ENCODE measurements at regions of chr1 and their contacts with region 1.

Region 1: DNA sequence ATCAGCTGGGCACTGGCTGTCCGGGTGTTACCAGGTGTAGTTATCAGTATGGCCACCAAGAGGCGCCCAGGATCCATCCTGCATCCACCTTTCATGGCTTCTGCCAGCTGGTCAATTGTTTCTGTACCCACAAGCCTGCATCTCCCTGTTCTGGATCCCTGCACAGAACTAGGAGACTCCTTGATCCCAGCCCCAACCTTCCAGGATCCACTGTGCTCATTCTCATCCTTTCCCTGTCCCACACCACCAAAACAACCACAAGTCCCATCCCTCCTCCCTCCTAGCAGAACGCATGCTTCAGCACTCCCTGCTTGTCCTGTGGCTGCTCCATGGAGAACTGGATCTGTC is 27.2 kb upstream of the FOXE3 start:
- DNase-seq: no peak
- H3K4me3 ChIP-seq: no peak overlapping the region
- H3K27me3 ChIP-seq: no peaks in the 10 kb centered on the region
- CTCF ChIP-seq: peak; percentile 88

Region 2: DNA sequence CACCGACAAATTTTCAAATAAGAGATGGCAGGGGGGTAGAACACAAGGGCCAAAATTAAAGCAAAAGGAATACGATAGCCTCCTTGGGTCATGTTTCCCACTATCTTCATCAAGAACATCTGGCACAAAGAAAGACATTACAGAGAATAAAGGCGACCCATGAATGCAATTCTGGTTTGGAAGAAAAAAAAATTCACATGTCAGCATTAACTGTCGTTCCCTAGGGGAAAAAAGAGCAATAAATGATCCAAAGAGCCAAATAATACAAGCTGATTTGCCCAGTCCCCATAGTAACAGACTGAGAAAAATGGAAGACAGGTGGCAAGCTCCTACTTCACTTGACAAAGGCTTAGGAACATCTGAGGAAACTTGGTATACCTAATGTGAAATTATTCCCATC is 79.4 kb before region 1 on chr1:
- CTCF ChIA-PET with region 1: no interaction called
- POLR2A ChIA-PET with region 1: no interaction called
- DNase-seq: no peak
- H3K4me3 ChIP-seq: no peak overlapping the region
- H3K27me3 ChIP-seq: no peaks in the 10 kb centered on the region
- CTCF ChIP-seq: no peak

Region 3: DNA sequence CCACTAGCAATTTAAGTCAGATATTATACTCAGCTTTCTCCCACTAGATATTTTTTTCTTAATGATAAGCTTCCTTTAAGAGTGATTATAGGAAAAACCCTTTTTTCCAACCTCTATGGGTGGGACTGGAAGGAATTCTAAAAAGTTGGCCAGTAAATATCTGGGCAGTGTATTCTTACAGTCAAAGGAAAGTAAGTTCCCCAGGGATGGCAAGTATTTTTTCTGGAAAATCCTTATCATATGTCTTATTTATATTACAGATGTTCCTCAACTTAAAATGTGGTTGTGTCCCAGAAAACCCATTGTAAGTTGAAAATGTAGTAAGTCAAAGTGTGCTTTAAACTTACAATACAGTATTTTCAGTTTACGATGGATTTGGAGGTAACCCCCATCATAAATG is 26.0 kb before region 1 on chr1:
- CTCF ChIA-PET with region 1: no interaction called
- POLR2A ChIA-PET with region 1: no interaction called
- DNase-seq: no peak
- H3K4me3 ChIP-seq: no peak overlapping the region
- H3K27me3 ChIP-seq: no peaks in the 10 kb centered on the region
- CTCF ChIP-seq: no peak

Region 4: DNA sequence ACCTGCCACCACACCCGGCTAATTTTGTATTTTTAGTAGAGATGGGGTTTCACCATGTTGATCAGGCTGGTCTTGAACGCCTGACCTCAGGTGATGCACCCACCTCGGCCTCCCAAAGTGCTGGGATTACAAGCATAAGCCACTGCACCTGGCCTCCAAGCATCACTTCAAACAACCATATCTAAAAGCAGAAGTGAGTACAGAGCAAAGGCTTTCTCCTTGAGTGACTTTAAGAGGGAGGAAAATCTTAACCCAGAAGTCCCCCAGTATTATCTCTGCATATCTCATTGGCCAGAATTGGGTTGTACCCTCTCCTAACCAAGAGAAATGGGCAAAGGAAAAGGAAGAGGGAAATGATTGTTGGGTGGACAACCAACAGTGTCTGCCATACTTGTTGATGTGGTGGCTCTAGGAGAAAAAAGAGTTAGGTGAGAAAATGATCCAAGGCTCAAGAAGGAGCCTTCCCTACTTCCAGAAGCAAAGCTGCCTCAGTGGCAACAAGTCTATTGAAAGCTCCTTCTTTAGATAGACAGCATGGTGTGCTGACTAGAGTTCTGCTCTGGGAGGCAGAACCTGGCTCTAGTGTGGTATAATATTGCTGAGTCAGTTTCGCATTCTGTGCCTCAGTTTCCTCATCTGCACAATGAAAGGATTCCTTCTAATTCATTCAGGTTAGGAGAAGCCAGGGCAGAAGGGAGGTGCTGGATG is 10.4 kb after region 1 on chr1:
- CTCF ChIA-PET with region 1: interaction called, 34 read pairs
- POLR2A ChIA-PET with region 1: no interaction called
- DNase-seq: no peak
- H3K4me3 ChIP-seq: no peak overlapping the region
- H3K27me3 ChIP-seq: no peaks in the 10 kb centered on the region
- CTCF ChIP-seq: no peak

Region 5: DNA sequence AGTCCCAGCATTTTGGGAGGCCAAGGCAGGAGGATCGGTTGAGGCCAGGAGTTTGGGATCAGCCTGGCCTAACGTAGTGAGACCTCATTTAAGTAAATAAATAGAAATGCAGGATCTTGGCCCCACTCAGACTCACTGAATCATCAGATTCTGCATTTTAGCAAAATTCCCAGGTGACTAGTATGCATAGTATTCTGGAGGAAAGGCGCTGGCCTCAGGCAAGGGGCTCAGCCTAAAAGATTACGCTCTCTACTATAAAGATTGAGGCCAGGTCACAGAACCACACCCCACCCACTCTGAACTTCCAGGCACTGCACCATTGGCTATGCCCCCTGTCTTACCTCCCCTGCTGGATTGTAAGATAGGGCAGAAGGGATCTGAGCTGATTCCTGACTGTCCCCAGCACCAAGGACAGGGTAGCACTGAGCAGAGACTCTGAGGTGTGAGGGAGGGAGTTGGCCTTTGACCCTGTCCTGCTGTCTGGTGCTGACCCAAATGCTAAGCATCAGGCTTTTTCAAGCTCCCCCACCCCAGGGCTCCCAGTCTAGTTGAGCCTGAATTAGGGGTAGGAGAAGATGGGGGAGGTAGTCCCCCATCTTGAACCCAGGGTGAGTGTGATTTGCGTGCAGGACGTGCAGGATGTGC is 29.9 kb after region 1 on chr1:
- CTCF ChIA-PET with region 1: interaction called, 57 read pairs
- POLR2A ChIA-PET with region 1: no interaction called
- DNase-seq: no peak
- H3K4me3 ChIP-seq: no peak overlapping the region
- H3K27me3 ChIP-seq: 0 out of 2 replicates have a peak, but pooled peaks cover 1% of the 10 kb centered on the region
- CTCF ChIP-seq: no peak

Region 6: DNA sequence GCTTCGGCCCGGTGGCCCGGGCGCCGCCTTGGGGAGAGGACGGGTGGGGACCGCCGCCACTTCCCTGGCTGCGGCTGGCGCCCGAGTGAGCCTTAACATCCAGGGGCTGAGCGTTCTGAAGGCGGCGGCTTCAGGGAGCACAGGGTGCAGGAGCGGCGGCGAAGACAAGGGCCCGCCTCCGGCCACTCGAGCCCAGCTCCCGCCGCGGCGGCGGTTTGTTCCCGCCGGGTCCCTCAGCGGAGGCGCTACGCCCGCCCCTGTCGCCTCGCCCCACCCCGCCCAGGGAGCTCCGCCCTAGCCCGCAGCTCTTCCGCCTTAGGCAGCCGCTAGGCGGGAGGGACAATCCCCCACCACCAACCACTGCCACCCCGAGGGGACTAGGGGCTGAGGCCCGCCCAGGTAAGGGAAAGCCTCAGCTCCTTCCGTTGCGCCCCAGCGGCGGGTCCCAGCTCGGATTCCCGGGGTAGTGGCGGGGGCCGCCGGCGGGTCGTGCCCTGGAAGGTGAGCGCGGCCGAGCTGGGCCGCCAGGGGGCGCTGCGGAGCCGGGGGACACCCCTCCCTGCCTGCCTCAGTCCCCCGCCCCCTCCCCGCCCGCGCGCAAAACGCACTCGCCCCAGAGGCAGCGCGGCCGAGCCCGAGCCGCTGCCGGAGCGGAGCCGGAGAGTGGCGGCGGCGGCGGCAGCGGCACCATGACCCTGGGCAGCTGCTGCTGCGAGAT is 48.7 kb after region 1 on chr1 and contains the start of gene FOXD2:
- CTCF ChIA-PET with region 1: interaction called, 169 read pairs
- POLR2A ChIA-PET with region 1: no interaction called
- DNase-seq: no peak
- H3K4me3 ChIP-seq: peak within 1 kb of the TSS; percentile 86
- H3K27me3 ChIP-seq: peaks cover 13% of the 10 kb centered on the region
- CTCF ChIP-seq: peak; percentile 61
- polyA plus RNA-seq, gene FOXD2: 0.07 and 0.09 TPM in 2 replicates

Region 7: GRCh38 chr1:47725992-47726855 is 337.4 kb after region 1 on chr1:
- CTCF ChIA-PET with region 1: interaction called, 34 read pairs
- POLR2A ChIA-PET with region 1: no interaction called
- DNase-seq: no peak
- H3K4me3 ChIP-seq: no peak overlapping the region
- H3K27me3 ChIP-seq: peaks cover 15% of the 10 kb centered on the region
- CTCF ChIP-seq: peak; percentile 95